ENCODE measurements at regions of chr19 and their contacts with region 1.

Region 1: DNA sequence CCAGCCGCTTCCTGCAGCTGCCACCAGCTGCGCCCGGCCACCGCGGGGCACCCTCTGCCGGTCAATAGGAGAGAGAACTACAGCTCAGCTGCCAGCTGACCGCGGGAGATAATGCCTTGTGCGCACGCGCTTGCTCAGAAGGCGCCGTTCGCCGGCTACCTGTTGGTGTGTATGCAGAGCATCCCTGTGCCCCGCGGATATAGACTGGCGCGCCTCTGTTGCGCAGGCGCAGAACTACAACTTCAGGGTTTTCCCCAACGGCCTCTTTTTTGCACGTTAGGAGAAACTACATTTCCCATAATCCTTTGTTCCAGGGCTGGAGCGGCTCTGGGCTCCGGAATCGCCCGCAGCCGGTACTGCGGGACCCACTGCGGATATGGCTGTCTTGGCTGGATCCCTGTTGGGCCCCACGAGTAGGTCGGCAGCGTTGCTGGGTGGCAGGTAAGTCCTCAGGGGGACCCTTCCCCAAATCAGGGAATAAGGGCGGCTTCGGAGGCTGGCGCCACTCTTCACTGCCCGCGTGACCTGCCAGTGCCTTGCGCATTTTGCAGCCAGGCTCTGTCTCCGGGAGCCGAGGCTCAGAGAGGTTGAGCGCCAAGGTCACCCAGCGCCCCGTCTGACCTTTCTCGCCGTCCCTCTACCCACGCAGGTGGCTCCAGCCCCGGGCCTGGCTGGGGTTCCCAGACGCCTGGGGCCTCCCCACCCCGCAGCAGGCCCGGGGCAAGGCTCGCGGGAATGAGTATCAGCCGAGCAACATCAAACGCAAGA is at the start of gene MRPL34:
- DNase-seq: peak; percentile 98
- ATAC-seq: peak; percentile 72
- H3K4me3 Mint-ChIP-seq: peak within 1 kb of the TSS; percentile 90
- H3K27ac Mint-ChIP-seq: peak within 1 kb of the TSS; percentile 92
- H3K4me1 Mint-ChIP-seq: peaks cover 61% of the 10 kb centered on the region
- H3K27me3 Mint-ChIP-seq: no peaks in the 10 kb centered on the region
- total RNA-seq, gene MRPL34: 112 to 126 TPM

Region 2: DNA sequence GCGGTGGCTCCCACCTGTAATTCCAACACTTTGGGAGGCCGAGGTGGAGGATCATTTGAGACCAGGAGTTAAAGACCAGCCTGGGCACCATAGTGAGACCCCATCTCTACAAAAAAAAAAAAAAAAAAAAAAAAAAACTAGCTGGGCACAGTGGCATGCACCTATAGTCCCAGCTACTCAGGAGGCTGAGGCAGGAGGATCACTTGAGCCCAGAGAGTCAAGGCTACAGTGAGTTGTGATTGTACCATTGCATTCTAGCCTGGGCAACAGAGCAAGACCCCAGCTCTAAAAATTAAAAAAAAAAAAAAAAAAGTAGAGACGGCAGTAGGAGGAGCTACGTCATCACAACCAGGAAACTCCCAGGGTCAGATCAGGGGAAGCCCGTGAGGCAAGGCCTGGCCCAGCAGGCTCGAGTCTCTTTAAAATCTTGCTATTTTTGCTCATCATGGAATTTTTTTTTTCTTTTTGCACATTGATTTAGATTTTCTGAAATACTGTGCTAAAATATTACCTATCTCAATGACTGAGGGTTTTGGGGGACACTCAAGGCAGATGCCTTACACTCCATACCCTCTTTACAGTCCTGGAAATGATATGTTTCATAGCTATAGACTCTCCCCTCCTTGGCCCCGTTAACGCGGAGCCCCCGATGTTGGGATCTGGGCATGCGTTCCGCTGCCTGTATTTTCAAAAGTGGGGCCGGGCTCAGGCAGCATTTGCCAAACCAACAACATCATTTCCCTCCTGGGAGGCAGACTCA is 135.0 kb before region 1 on chr19:
- CTCF ChIA-PET with region 1: no interaction called
- POLR2A ChIA-PET with region 1: no interaction called
- DNase-seq: no peak
- ATAC-seq: no peak
- H3K4me3 Mint-ChIP-seq: no peak overlapping the region
- H3K27ac Mint-ChIP-seq: no peak overlapping the region
- H3K4me1 Mint-ChIP-seq: peaks cover 5% of the 10 kb centered on the region
- H3K27me3 Mint-ChIP-seq: no peaks in the 10 kb centered on the region

Region 3: GRCh38 chr19:17292286-17293097 is 13.2 kb before region 1 on chr19:
- CTCF ChIA-PET with region 1: interaction called, 23 read pairs
- POLR2A ChIA-PET with region 1: interaction called, 4 read pairs
- DNase-seq: peak; percentile 86
- ATAC-seq: peak; percentile 97
- H3K4me3 Mint-ChIP-seq: peak overlapping the region; percentile 85
- H3K27ac Mint-ChIP-seq: peak overlapping the region; percentile 77
- H3K4me1 Mint-ChIP-seq: peaks cover 15% of the 10 kb centered on the region
- H3K27me3 Mint-ChIP-seq: peaks cover 4% of the 10 kb centered on the region

Region 4: DNA sequence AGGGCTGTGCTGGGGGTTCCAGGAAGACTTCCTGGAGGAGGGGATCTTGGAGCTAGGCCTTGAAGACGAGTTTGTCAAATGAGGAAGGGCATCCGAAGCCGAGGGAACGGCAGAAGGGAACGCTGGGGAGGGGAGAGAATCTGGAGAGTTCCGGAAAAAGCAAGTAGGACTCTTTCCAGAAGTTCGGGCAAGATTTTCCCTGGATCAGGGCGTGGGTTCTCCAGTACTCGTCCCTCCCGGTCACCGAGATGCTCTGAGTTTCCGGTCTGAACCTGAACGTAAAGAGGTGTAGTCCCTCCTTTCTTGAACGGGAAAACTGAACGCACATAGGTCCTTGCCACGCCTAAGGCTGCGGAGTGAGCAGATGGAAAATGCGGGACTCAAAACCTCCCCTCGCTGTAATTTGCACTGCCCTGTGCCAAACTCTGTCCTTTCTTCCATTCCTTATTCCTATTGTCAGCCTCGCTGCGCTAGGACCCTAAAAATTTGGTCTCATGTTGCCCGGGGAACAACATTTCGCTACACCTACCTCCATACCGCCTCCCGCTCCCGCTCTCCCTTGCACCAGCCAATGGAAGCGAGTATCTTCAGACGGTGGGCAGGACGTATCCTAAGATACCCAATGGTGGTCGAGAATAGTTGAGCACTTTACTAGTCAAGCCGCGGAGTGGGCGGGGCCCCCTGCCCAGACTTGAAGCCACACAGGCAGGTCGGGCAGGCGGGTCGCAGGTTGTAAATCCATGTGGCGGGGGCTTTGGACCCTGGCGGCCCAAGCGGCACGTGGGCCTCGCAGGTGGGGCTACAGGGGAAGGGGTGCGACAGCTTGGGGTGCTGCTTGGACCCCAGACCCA is 31.4 kb after region 1 on chr19 and contains the start of gene GTPBP3:
- CTCF ChIA-PET with region 1: interaction called, 27 read pairs
- POLR2A ChIA-PET with region 1: interaction called, 5 read pairs
- DNase-seq: peak; percentile 99
- ATAC-seq: peak; percentile 91
- H3K4me3 Mint-ChIP-seq: peak within 1 kb of the TSS; percentile 97
- H3K27ac Mint-ChIP-seq: peak within 1 kb of the TSS; percentile 88
- H3K4me1 Mint-ChIP-seq: peaks cover 45% of the 10 kb centered on the region
- H3K27me3 Mint-ChIP-seq: no peaks in the 10 kb centered on the region
- total RNA-seq, gene GTPBP3: 38.6 to 39.4 TPM